ENCODE measurements at regions of chr13 and their contacts with region 1.

Region 1: DNA sequence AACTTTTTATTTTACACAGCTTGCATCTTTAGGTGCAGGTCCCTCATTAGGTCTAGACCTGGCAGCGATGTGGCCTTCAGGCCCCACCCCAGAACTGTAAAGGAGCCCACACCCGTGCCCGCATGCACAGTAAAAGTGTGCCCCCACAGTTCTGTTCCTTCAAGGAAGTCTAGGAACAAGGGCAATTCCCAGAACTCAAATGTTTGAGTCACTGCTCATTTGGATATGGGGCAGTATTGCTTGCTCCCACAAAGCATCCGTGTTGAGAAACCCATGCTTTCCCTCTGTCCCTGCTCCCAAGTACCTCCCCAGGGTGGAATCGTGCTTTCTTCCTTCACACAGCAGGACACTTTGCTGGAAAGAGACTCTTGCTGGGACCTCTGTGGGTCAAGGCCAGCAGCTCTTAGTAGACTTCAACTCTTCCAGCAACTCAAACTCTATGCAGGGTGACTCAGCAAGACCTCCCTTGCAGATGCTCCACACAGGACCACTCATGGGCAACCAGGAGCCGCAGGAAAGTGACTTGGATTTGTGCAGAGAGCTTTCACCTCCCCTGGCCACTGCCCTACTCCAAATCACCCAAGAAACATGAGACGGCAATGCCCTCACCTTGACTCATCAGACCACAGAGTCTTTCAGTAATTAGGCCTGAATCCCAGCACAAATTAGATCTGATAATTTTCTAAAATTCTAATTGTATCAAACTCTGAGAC is 12.3 kb downstream of the SLC7A1 start:
- DNase-seq: no peak
- H3K4me3 Mint-ChIP-seq: no peak overlapping the region
- H3K27ac Mint-ChIP-seq: no peak overlapping the region
- H3K4me1 Mint-ChIP-seq: peaks cover 25% of the 10 kb centered on the region
- H3K27me3 Mint-ChIP-seq: no peaks in the 10 kb centered on the region

Region 2: DNA sequence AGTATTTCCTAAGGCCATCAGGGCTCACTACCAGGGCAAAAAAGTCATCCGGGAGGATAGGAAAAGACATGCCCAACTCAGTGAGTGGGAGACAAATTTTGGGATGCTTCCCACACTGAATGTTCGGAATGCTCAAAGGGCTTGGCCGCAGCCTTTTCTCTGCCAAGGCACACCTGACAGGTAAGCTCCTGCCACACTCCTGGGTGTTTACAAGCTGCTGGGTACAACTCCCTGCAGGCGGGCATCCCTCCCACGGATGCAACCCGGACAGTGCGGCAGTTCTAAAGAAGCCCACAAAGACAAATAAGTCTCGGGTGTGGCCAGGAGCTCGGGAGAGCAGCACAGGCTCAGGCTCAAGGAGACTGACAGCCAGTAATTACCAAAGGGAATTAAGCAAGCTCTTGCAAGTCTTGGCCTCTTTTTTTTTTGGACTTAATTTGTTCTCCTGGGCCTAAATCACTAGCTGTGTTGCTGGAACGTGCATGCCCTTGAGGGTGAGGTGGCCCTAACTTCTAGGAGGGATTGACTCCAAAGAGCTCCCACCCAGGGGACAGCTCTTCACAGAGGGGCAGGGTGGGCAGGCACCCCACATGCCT is 15.7 kb before region 1 on chr13:
- CTCF ChIA-PET with region 1: interaction called, 10 read pairs
- POLR2A ChIA-PET with region 1: no interaction called
- DNase-seq: no peak
- H3K4me3 Mint-ChIP-seq: no peak overlapping the region
- H3K27ac Mint-ChIP-seq: no peak overlapping the region
- H3K4me1 Mint-ChIP-seq: peaks cover 28% of the 10 kb centered on the region
- H3K27me3 Mint-ChIP-seq: no peaks in the 10 kb centered on the region